Caco-2 (cell line): ENCODE measurements at regions of chr11 and their contacts with region 1.

Region 1: DNA sequence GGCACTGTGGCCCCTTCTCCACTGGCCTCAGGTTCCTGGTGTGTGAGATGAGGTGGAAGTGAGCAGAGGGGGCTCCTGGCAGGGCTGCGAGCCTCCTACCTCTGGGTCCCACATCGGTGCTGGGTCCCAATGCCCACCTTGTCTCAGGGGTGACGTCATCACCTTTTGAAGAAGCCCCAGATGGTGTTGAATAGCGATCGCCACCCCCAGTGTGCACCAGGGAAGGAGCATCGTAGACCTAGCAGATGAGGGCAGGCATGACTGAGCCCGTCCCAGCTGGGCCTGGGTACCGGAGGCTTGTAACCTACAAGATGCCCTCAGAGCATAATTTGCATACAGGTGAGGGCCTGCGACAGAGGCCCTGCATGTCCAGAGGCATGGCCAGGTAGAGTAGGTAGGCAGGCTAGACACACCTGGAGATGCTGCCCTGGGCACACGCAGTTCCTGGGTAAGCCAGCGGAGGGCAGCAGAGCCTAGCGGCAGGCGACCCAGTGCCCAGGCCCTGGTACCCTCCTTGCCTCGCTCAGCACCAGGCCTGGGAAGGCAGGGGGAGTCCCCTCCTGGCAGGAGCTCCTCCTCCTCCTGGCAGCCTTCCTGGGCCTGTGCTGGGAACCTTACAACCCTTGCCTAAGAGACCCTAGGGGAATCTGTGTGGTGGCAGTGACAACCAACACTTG is 52.5 kb downstream of the TPCN2 start:
- DNase-seq: peak; percentile 82 to 93
- H3K4me3 ChIP-seq: no peak overlapping the region
- H3K4me3 Mint-ChIP-seq: no peak overlapping the region
- H3K27ac Mint-ChIP-seq: no peak overlapping the region
- H3K4me1 ChIP-seq: peaks cover 6% of the 10 kb centered on the region; the same call in 1 of the 2 replicates
- H3K4me1 Mint-ChIP-seq: peaks cover 8% of the 10 kb centered on the region
- H3K27me3 ChIP-seq: no peaks in the 10 kb centered on the region
- H3K27me3 Mint-ChIP-seq: no peaks in the 10 kb centered on the region
- CTCF ChIP-seq: peak; percentile 100

Region 2: DNA sequence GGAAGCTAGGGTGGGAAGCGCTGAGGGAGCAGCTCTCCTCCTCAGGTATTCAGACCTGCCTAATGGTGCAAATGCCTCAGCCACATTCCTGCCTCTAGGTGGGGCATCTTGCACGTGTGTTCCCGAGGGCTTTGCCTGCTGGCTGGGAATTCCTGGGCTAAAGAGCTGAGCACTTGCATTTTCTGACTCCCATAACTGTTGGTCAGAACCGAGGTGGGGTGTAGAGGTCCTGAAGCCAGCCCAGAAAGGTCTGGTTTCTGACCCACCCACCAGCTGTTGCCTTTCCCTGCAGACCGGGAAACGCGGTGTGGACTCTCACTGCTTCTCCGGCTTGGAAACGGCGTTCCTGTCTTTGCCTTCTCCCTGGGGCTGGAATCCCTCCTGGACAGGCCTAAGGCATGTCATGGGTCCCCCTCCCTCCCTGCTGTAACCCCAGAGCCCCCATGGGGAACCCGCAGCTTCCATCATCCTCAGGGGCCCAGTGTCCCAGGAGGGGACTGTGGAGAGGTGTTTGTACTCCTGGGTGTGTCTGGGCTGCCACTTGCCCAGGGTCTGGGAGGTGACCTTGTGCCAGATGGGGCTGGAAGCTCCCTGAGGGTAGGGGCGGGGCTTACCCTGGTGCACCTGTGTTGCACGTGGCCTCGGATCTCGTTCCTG is 30.5 kb after region 1 on chr11:
- CTCF ChIA-PET with region 1: interaction called, 20 read pairs
- POLR2A ChIA-PET with region 1: interaction called, 3 read pairs
- intact Hi-C with region 1: loop called (anchors 1 kb)
- DNase-seq: peak; percentile 94 to 96
- H3K4me3 ChIP-seq: no peak overlapping the region
- H3K4me3 Mint-ChIP-seq: no peak overlapping the region
- H3K27ac Mint-ChIP-seq: peak overlapping the region; percentile 74
- H3K4me1 ChIP-seq: peaks cover 22% of the 10 kb centered on the region
- H3K4me1 Mint-ChIP-seq: peaks cover 16% of the 10 kb centered on the region
- H3K27me3 ChIP-seq: no peaks in the 10 kb centered on the region
- H3K27me3 Mint-ChIP-seq: no peaks in the 10 kb centered on the region
- CTCF ChIP-seq: peak; percentile 98

Region 3: GRCh38 chr11:69240332-69241074 is 139.2 kb after region 1 on chr11:
- CTCF ChIA-PET with region 1: interaction called, 3 read pairs
- POLR2A ChIA-PET with region 1: no interaction called
- intact Hi-C with region 1: loop called (anchors 1 kb)
- DNase-seq: peak; percentile 52 to 56
- H3K4me3 ChIP-seq: no peak overlapping the region
- H3K4me3 Mint-ChIP-seq: no peak overlapping the region
- H3K27ac Mint-ChIP-seq: no peak overlapping the region
- H3K4me1 ChIP-seq: no peaks in the 10 kb centered on the region
- H3K4me1 Mint-ChIP-seq: no peaks in the 10 kb centered on the region
- H3K27me3 ChIP-seq: no peaks in the 10 kb centered on the region
- H3K27me3 Mint-ChIP-seq: peaks cover 2% of the 10 kb centered on the region
- CTCF ChIP-seq: peak; percentile 47 to 59

Region 4: GRCh38 chr11:69436973-69437875 is 336.0 kb after region 1 on chr11:
- CTCF ChIA-PET with region 1: interaction called, 4 read pairs
- POLR2A ChIA-PET with region 1: no interaction called
- intact Hi-C with region 1: loop called (anchors 1 kb)
- DNase-seq: peak; percentile 100
- H3K4me3 ChIP-seq: no peak overlapping the region
- H3K4me3 Mint-ChIP-seq: peak overlapping the region; percentile 44
- H3K27ac Mint-ChIP-seq: peak overlapping the region; percentile 92
- H3K4me1 ChIP-seq: peaks cover 75% of the 10 kb centered on the region
- H3K4me1 Mint-ChIP-seq: peaks cover 62% of the 10 kb centered on the region
- H3K27me3 ChIP-seq: no peaks in the 10 kb centered on the region
- H3K27me3 Mint-ChIP-seq: no peaks in the 10 kb centered on the region
- CTCF ChIP-seq: peak; percentile 42 to 57

Region 5: DNA sequence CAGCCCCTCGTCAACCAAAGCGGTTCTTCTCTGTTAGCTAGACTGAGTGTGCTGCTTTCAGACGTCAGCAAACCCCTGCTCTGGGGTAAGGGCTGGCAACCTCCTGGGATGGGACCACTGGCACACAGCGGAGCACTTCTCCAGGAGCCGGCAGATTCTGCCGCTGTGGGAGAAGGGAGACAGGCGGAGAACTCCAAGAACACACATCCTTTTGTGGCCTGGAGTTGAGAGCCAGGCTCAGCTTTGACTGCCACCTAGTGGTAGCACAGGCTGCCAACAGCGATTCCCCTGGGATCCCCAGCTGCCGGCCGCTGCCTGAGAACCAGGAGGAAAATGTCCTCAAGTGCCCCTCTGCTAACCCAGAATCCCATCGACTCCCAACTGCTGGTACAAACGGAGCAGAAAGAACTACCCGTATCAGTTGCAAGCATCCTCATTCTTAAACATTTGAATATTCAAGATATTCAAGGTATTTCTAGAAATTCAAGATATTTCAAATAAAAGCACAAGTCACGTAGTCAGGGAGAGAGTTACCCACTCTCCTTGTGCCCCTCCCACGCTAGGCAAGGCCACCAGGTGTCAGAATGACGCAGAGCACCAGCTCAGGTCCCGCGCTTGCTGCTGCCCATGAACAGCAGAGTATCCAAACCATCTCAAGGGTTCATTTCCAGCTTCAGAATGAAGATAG is 569.0 kb after region 1 on chr11:
- CTCF ChIA-PET with region 1: interaction called, 12 read pairs
- POLR2A ChIA-PET with region 1: no interaction called
- intact Hi-C with region 1: loop called (anchors 1 kb)
- DNase-seq: peak; percentile 89 to 93
- H3K4me3 ChIP-seq: no peak overlapping the region
- H3K4me3 Mint-ChIP-seq: no peak overlapping the region
- H3K27ac Mint-ChIP-seq: peak overlapping the region; percentile 34
- H3K4me1 ChIP-seq: peaks cover 15% of the 10 kb centered on the region
- H3K4me1 Mint-ChIP-seq: peaks cover 17% of the 10 kb centered on the region
- H3K27me3 ChIP-seq: no peaks in the 10 kb centered on the region
- H3K27me3 Mint-ChIP-seq: peaks cover under 1% of the 10 kb centered on the region
- CTCF ChIP-seq: peak; percentile 99